ENCODE measurements at regions of chr13 and their contacts with region 1.

Region 1: DNA sequence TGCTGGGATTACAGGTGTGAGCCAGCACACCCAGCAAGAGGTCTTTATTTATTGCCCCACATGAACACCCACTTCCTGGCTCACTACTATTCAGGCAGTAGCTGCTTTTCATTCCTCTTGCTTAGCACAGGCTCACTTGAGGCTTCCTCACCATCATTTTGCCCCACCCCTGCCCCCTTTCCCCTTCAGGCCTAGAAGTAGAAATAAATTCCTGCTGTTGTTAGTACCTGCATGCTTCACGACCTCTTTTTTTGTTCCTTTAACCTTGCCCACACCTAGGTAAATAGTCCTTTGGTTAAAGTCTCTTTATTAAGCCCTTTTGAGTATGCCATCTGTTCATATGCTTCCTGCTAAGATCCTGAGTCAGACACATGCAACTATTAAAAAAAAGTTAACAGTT is 33.5 kb upstream of the ITM2B start:
- DNase-seq: no peak
- ATAC-seq: no peak
- H3K4me3 ChIP-seq: no peak overlapping the region
- H3K27ac ChIP-seq: no peak overlapping the region
- H3K4me1 ChIP-seq: no peaks in the 10 kb centered on the region
- H3K27me3 ChIP-seq: peaks cover 2% of the 10 kb centered on the region; the same call in 1 of the 2 replicates
- CTCF ChIP-seq: no peak
- POLR2A ChIP-seq: no peak
- RAD21 ChIP-seq: no peak

Region 2: DNA sequence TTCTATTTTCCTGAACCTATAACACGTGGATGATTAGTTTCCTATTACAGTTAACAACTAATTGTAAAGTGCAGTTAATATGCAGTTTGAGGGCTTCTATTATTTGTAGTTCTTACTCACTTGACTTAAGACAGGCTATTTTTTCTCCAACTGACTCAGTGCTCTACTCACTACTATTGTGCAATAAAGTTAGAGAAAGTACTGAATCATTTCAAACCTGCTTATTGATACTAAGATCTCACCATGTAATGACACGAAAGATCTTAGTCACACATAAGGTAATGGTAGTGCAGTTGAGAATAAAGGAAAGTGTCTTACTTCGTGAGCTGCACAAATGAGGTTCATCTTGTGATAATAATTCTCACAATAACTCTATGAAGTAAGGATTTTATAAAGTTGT is 10.7 kb after region 1 on chr13:
- CTCF ChIA-PET with region 1: interaction called, 3 read pairs
- POLR2A ChIA-PET with region 1: no interaction called
- dilution Hi-C with region 1: no loop called
- in situ Hi-C with region 1: no loop called
- intact Hi-C with region 1: loop called (anchors 1 kb)
- DNase-seq: peak; percentile 86
- ATAC-seq: peak; percentile 66
- H3K4me3 ChIP-seq: no peak overlapping the region
- H3K27ac ChIP-seq: no peak overlapping the region
- H3K4me1 ChIP-seq: no peaks in the 10 kb centered on the region
- H3K27me3 ChIP-seq: no peaks in the 10 kb centered on the region; the same call in 1 of the 2 replicates
- CTCF ChIP-seq: no peak
- POLR2A ChIP-seq: no peak
- RAD21 ChIP-seq: no peak